ENCODE measurements at regions of chr12 and their contacts with region 1.

Region 1: DNA sequence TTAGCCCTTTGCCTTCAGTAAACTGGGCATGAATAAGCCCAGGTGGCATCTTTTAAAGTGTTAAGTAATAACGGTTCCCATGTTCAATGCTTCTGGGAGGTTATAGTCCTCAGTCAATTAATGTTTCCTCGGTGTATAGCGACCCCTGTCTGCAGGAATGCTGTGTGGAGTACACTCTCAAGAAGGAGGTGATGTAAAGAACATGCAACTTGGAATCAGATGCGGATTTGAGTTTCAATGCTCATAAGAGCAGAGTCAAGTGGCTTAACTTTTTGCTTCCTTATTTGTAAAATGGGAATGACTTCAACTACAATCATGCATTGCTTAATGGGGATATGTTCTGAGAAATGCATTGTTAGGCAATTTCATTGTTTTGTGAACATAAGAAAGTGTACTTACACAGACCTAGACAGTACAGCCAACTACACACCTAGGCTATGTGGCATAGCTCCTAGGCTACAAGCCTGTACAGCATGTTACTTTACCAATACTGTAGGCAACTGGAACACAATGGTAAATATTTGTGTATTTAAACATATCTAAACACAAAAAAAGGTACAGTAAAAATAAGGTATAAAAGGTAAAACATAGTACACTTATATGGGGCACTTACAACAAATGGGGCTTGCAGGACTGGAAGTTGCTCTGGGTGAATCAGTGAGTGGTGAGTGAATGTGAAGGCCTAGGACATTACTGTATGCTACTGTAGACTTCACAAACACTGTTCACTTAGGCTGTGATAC is 6.8 kb upstream of the MRPS35 start:
- DNase-seq: peak; percentile 47 to 88
- ATAC-seq: peak; percentile 94 to 97
- H3K4me3 ChIP-seq: no peak overlapping the region
- H3K27ac ChIP-seq: peak overlapping the region; percentile 52 to 70; a peak in 5 of 6 replicates
- H3K4me1 ChIP-seq: peaks cover 7% of the 10 kb centered on the region; the same call in 2 of the 3 replicates
- CTCF ChIP-seq: peak; percentile 95
- EP300 ChIP-seq: no peak
- POLR2A ChIP-seq: no peak
- RAD21 ChIP-seq: peak; percentile 81 to 90

Region 2: DNA sequence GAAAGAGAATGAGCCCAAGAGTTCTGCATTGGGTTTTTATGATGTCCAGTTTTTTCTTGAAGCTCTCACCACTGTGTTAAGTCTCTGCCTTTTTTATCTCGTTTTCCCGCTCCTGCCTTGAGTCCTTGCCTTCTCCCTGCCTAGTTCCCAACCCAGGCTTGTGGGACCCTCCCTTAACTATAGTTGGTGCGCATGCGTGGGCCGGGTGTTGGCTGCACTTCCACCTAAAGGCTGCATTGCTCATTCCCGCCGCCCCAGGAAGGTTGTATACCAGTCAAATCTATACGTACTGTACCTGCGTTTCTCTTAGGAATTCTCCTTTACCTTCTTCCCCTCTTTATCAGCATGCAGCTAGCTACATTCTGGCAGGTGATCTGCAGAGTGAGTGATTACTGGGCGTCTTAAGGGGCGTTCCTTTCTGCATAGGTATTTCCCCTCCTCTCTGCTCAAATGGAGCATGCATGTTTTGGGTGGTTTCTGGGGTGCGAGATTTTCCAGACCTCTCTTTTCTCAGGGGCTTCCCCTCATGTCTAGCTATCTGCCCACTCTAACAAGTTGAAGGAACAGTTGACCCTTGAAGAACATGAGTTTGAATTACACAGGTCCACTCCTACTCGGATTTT is 14.2 kb before region 1 on chr12:
- CTCF ChIA-PET with region 1: interaction called, 10 read pairs
- POLR2A ChIA-PET with region 1: no interaction called
- DNase-seq: no peak
- ATAC-seq: no peak
- H3K4me3 ChIP-seq: no peak overlapping the region
- H3K27ac ChIP-seq: no peak overlapping the region
- H3K4me1 ChIP-seq: peaks cover 14% of the 10 kb centered on the region; the same call in 2 of the 3 replicates
- CTCF ChIP-seq: no peak
- EP300 ChIP-seq: no peak
- POLR2A ChIP-seq: no peak
- RAD21 ChIP-seq: no peak

Region 3: GRCh38 chr12:28145216-28145615 is 441.3 kb after region 1 on chr12:
- CTCF ChIA-PET with region 1: no interaction called
- POLR2A ChIA-PET with region 1: no interaction called
- DNase-seq: no peak
- ATAC-seq: no peak
- H3K4me3 ChIP-seq: no peak overlapping the region
- H3K27ac ChIP-seq: no peak overlapping the region
- H3K4me1 ChIP-seq: peaks cover 6% of the 10 kb centered on the region; the same call in 1 of the 3 replicates
- CTCF ChIP-seq: no peak
- EP300 ChIP-seq: no peak
- POLR2A ChIP-seq: no peak
- RAD21 ChIP-seq: no peak